ENCODE measurements at regions of chr2 and their contacts with region 1.

Region 1: DNA sequence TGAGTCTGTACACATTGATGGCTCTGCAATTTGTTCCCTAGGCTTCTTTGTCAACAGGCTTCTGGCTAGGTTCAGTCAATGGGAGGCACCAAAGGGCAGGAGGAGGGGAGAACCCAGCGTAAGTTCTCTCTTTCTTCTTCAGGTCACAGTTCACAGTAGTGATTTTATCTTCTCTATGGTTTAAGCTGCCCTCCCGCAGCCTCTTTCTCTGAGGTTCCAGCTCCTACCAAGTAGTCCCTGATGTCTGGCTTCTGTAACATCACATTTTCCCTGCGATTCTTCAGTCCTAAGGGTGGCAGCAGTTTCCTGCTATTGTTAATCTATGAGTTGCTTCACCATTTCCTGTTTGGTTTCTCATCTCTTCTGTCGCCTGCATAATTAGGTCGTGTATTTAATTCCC is 107.4 kb downstream of the CPO start:
- DNase-seq: peak; percentile 59
- H3K4me3 Mint-ChIP-seq: no peak overlapping the region
- H3K27ac Mint-ChIP-seq: peak overlapping the region; percentile 62
- H3K4me1 Mint-ChIP-seq: peaks cover 10% of the 10 kb centered on the region
- H3K27me3 Mint-ChIP-seq: no peaks in the 10 kb centered on the region

Region 2: DNA sequence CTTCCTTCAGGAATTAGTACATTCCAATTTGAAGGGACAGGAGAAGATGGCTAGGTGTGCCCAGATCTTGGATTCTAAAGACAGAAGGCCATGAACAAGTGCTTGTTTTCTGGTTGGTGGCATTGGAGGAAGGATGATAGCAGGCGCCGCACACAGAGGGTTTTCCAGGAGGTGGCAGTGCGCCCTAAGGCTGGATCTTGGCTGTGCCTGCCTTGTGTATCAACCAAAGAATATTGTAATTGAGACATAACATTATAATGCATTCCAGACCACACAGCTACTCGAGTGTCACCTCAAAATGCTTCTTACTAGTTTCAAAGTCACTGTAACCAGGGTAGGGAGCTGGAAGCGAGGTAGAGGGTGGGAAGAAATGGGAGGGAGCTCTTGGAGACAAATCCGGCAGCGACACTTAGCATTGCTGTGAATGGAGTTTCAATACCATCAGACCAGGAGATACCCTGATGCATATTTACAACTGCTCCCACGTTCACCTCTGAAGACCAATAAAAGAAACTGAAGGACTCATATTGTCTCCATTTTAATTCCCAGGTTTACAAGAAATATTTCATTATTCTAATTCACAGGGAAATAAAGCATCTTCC is 64.9 kb before region 1 on chr2:
- CTCF ChIA-PET with region 1: interaction called, 5 read pairs
- intact Hi-C with region 1: loop called (anchors 1 kb)
- DNase-seq: peak; percentile 73
- H3K4me3 Mint-ChIP-seq: no peak overlapping the region
- H3K27ac Mint-ChIP-seq: no peak overlapping the region
- H3K4me1 Mint-ChIP-seq: peaks cover 14% of the 10 kb centered on the region
- H3K27me3 Mint-ChIP-seq: no peaks in the 10 kb centered on the region

Region 3: DNA sequence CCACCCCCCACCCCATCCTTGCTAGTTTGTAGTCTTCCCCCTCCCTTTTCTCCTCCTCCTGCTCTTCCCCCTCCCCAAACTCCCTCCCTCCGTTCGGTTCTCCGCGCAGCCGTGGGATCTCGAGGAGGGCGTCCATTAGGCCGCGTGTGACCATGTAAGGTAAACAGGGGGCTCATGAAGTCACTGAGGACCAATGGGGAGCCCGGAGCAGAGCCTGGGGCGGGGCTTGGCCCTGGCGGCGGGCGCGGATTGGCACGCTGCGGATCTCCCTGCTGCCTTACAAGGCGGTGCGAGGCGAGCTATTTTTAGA is 119.3 kb after region 1 on chr2:
- CTCF ChIA-PET with region 1: interaction called, 3 read pairs
- intact Hi-C with region 1: loop called (anchors 1 kb)
- DNase-seq: peak; percentile 98
- H3K4me3 Mint-ChIP-seq: peak overlapping the region; percentile 95
- H3K27ac Mint-ChIP-seq: peak overlapping the region; percentile 96
- H3K4me1 Mint-ChIP-seq: peaks cover 43% of the 10 kb centered on the region
- H3K27me3 Mint-ChIP-seq: no peaks in the 10 kb centered on the region

Region 4: DNA sequence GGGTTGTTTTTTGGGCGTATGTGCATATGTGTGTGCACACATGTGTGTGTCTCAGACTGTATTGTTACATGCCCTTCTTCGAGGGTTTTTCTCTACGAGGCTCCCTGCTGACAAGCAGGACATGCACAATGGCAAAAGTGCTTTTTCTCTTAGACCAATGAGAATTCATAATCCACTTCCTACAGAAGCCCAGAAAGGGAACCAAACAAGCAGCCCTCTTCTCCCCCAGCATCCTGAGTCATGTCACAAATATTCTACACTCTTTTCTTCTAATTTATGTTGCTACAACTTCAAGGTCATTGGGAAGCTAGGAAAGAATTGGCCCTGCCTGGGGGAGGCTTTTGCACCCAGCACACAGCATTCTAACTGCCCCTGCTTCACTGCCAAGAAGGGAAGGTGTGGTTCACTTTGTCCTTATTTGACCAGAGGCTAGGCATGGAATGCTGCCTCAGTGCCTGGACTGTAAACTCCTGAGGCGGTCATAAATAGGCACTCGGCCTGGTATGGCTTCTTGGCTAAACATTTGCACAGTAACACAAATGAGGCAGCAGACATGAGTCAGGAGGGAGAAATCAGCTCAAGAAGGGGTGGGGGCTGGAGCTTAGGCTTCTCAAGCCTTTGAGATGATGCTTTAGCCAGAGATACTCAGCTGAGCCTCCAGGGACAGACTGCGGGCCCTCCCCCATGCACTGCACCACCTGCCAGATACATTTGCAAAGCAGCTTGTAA is 211.7 kb after region 1 on chr2:
- CTCF ChIA-PET with region 1: interaction called, 4 read pairs
- intact Hi-C with region 1: loop called (anchors 2 kb)
- DNase-seq: no peak
- H3K4me3 Mint-ChIP-seq: no peak overlapping the region
- H3K27ac Mint-ChIP-seq: no peak overlapping the region
- H3K4me1 Mint-ChIP-seq: peaks cover 10% of the 10 kb centered on the region
- H3K27me3 Mint-ChIP-seq: no peaks in the 10 kb centered on the region

Region 5: GRCh38 chr2:207352978-207353671 is 306.4 kb after region 1 on chr2:
- CTCF ChIA-PET with region 1: no interaction called
- intact Hi-C with region 1: loop called (anchors 1 kb)
- DNase-seq: peak; percentile 65
- H3K4me3 Mint-ChIP-seq: no peak overlapping the region
- H3K27ac Mint-ChIP-seq: no peak overlapping the region
- H3K4me1 Mint-ChIP-seq: peaks cover 8% of the 10 kb centered on the region
- H3K27me3 Mint-ChIP-seq: no peaks in the 10 kb centered on the region